CD4-positive, alpha-beta memory T cell (primary cell): ENCODE measurements at regions of chr9 and their contacts with region 1.

Region 1: DNA sequence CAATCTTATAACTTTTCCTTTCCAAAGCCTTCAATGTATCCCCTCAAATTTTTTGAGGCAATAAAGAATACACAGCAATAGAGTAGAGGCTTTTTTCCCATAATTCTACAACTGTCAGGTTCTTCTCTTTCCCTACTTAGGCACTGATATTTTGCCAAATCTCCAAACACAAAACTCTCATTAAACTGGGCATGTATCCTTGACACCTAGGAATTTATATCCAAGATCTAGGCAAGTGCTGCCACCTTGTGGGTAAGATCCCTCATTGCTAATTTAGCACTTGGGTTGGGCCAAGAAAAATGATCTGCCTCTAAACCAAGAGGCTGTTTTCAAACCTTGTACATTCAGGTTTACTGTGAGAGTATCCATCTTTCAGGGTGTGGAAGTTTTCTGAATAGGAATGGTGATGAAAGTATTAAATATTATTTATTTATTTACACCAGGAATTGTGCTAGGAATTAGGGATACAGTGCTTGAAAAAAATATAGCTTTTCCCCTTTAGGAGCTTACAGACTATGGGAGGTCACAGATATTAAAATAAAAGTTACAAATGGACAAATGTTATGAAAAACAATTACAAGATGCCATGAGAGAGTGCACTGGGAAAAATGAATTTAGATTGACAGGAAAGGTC is 17.6 kb downstream of the TSTD2 start:
- DNase-seq: peak; percentile 49 to 63 (median 57)
- H3K4me3 ChIP-seq: no peak overlapping the region
- H3K4me3 Mint-ChIP-seq: no peak overlapping the region
- H3K27ac ChIP-seq: no peak overlapping the region
- H3K27ac Mint-ChIP-seq: peak overlapping the region in 2 of 7 donors; percentile 1 to 10
- H3K4me1 ChIP-seq: no peaks in the 10 kb centered on the region
- H3K4me1 Mint-ChIP-seq: peaks cover 0 to 1% (median 0%) of the 10 kb centered on the region in 4 donors
- H3K27me3 ChIP-seq: no peaks in the 10 kb centered on the region
- H3K27me3 Mint-ChIP-seq: no peaks in the 10 kb centered on the region

Region 2: DNA sequence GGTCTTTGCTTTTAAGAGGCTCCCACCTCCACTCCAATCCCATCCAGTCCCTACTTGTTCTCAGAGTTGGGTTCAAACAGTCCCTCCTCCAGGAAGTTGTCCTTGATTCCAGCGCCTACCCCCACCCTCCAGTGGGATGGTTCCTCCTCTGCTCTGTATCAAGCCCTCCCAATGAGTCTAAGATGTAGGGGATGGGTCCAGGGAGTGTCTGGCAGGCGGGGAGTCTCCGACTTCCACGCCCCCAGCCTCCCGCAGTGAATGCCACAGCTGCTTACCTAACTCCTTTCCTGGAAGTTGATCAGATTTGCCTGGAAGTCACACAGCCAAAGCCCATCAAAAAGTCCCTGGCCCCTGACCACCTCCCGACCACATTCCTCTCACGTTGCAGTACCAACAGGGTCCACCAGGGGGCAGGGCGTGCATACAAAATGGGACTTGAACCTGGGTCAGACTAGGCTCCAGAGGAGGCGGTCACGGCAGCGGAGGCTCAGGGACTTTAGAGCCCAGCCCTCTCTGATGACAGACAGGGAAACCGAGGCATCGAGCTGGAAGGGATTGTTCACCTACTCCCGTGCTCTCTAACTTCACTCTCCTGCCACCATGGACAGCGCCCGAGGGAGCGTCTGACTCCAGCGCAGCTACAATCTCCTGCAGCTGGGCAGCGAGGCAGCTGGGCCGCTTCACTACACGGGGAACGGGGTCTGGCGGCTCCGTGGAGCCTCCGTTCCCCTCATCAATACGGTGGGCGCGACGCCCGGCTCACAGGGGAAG is 228.6 kb before region 1 on chr9:
- CTCF ChIA-PET with region 1: interaction called, 5 read pairs
- POLR2A ChIA-PET with region 1: no interaction called
- intact Hi-C with region 1: loop called (anchors 1 kb)
- DNase-seq: peak; percentile 43 to 66 (median 57)
- H3K4me3 ChIP-seq: no peak overlapping the region
- H3K4me3 Mint-ChIP-seq: peak overlapping the region in 2 of 8 donors; percentile 22 to 46
- H3K27ac ChIP-seq: no peak overlapping the region
- H3K27ac Mint-ChIP-seq: peak overlapping the region in 1 of 7 donors; percentile 72
- H3K4me1 ChIP-seq: peaks cover 7% of the 10 kb centered on the region
- H3K4me1 Mint-ChIP-seq: peaks cover 2 to 14% (median 9%) of the 10 kb centered on the region in 4 donors
- H3K27me3 ChIP-seq: no peaks in the 10 kb centered on the region
- H3K27me3 Mint-ChIP-seq: peaks cover 2 to 7% of the 10 kb centered on the region in 2 donors

Region 3: GRCh38 chr9:97411789-97412625 is 203.5 kb before region 1 on chr9 and contains the start of gene TDRD7:
- CTCF ChIA-PET with region 1: interaction called, 99 read pairs
- POLR2A ChIA-PET with region 1: interaction called, 6 read pairs
- intact Hi-C with region 1: loop called (anchors 1 kb)
- DNase-seq: peak; percentile 86 to 94 (median 90)
- H3K4me3 ChIP-seq: peak within 1 kb of the TSS; percentile 38 to 61
- H3K4me3 Mint-ChIP-seq: peak within 1 kb of the TSS; percentile 82 to 93 (median 90)
- H3K27ac ChIP-seq: peak within 1 kb of the TSS; percentile 84
- H3K27ac Mint-ChIP-seq: peak within 1 kb of the TSS; percentile 82 to 96 (median 93)
- H3K4me1 ChIP-seq: peaks cover 21% of the 10 kb centered on the region
- H3K4me1 Mint-ChIP-seq: peaks cover 23 to 37% (median 32%) of the 10 kb centered on the region in 4 donors
- H3K27me3 ChIP-seq: no peaks in the 10 kb centered on the region
- H3K27me3 Mint-ChIP-seq: peaks cover 5 to 16% of the 10 kb centered on the region in 2 donors
- total RNA-seq, gene TDRD7: 12.7 to 13.6 TPM

Region 4: DNA sequence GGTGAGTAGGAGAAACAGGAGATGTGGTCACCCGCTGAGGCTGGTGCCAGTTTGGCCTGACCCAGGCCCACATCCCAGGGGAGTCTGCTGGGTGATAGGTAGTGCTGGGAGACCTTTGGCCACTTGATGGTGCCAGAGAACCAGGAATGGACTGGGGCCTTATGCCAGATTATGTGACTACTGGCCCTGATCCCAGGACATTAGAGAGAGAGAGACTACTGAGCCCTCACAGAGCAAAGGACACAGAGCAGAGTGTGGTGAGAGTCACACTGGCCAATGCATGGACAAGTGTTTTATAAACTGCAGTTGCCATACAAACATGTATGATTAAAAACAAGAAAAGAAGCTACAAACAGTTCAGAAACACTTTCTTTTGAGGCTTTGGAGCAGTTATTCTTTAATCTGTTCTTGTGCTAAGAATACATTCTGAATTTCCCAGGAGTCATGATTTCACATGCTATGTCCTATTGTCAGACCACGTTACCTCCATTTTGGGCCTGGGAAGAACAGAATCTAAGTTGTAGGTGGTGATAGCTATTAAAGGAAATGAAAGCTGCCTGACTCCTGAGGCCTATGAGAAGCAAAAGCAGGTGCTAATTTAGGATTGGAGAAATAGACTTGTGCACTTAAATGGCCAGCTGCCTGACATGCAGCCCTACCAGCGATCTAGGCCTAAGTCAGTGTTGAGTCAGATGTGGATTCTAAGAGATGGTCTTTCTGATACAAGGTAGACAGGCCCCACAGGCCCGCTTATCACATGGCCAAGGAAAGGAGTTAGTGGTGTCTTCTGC is 146.7 kb before region 1 on chr9:
- CTCF ChIA-PET with region 1: interaction called, 23 read pairs
- POLR2A ChIA-PET with region 1: no interaction called
- intact Hi-C with region 1: loop called (anchors 1 kb)
- DNase-seq: peak in 3 of 5 donors; percentile 13 to 16 (median 15)
- H3K4me3 ChIP-seq: no peak overlapping the region
- H3K4me3 Mint-ChIP-seq: no peak overlapping the region
- H3K27ac ChIP-seq: no peak overlapping the region
- H3K27ac Mint-ChIP-seq: peak overlapping the region in 2 of 7 donors; percentile 7 to 44
- H3K4me1 ChIP-seq: peaks cover 5% of the 10 kb centered on the region
- H3K4me1 Mint-ChIP-seq: no peaks in the 10 kb centered on the region
- H3K27me3 ChIP-seq: no peaks in the 10 kb centered on the region
- H3K27me3 Mint-ChIP-seq: no peaks in the 10 kb centered on the region

Region 5: GRCh38 chr9:97632985-97633858 is 17.7 kb after region 1 on chr9 and contains the starts of genes NCBP1 and TSTD2:
- CTCF ChIA-PET with region 1: interaction called, 16 read pairs
- POLR2A ChIA-PET with region 1: interaction called, 8 read pairs
- intact Hi-C with region 1: no loop called
- DNase-seq: peak; percentile 96 to 97 (median 97)
- H3K4me3 ChIP-seq: peak within 1 kb of the TSS; percentile 80 to 87
- H3K4me3 Mint-ChIP-seq: peak within 1 kb of the TSS; percentile 96 to 100 (median 98)
- H3K27ac ChIP-seq: peak within 1 kb of the TSS; percentile 92
- H3K27ac Mint-ChIP-seq: peak within 1 kb of the TSS; percentile 96 to 100 (median 100)
- H3K4me1 ChIP-seq: peaks cover 52% of the 10 kb centered on the region
- H3K4me1 Mint-ChIP-seq: peaks cover 37 to 65% (median 51%) of the 10 kb centered on the region in 4 donors
- H3K27me3 ChIP-seq: no peaks in the 10 kb centered on the region
- H3K27me3 Mint-ChIP-seq: no peaks in the 10 kb centered on the region
- total RNA-seq, gene NCBP1: 40.7 to 50.8 TPM
- total RNA-seq, gene TSTD2: 17.8 to 18.4 TPM